ENCODE measurements at regions of chrX and their contacts with region 1.

Region 1: DNA sequence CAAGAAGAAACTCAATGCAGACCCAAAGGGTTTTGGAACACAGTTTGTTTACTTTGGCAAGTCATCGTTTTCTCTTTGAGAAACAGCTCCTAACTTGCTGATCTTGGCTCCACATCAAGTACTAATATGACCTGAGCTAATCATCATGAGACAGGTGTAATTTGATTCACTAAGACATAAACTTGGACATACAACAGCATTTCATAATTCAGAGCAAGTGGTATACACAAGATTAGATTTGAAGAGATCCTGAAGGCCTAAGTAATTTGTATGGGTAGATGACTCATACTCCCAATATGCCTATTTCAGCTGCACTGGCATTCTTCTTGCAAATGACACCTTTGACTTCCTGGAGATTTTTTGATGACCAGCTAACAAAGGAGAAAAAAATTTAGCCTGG is 1521.7 kb downstream of the RPA4 start:
- DNase-seq: no peak
- ATAC-seq: no peak
- H3K4me3 ChIP-seq: no peak overlapping the region
- H3K27ac ChIP-seq: no peak overlapping the region
- H3K4me1 ChIP-seq: no peaks in the 10 kb centered on the region
- H3K27me3 ChIP-seq: no peaks in the 10 kb centered on the region
- CTCF ChIP-seq: no peak

Region 2: GRCh38 chrX:99242001-99242400 is 836.6 kb after region 1 on chrX:
- CTCF ChIA-PET with region 1: no interaction called
- POLR2A ChIA-PET with region 1: no interaction called
- in situ Hi-C with region 1: no loop called
- intact Hi-C with region 1: loop called (anchors 5 kb)
- DNase-seq: no peak
- ATAC-seq: no peak
- H3K4me3 ChIP-seq: no peak overlapping the region
- H3K27ac ChIP-seq: no peak overlapping the region
- H3K4me1 ChIP-seq: no peaks in the 10 kb centered on the region
- H3K27me3 ChIP-seq: no peaks in the 10 kb centered on the region
- CTCF ChIP-seq: no peak

Measured in Panc1 (cell line).